Activated CD4-positive, alpha-beta memory T cell treated with anti-CD3 and anti-CD28 coated beads for 36 hours (primary cell): ENCODE measurements at regions of chr12 and their contacts with region 1.

Region 1: GRCh38 chr12:68610370-68611093 is at the start of gene RAP1B:
- DNase-seq: peak; percentile 92
- H3K4me3 Mint-ChIP-seq: peak within 1 kb of the TSS; percentile 94
- H3K27ac Mint-ChIP-seq: peak within 1 kb of the TSS; percentile 98
- H3K4me1 Mint-ChIP-seq: peaks cover 37% of the 10 kb centered on the region
- H3K27me3 Mint-ChIP-seq: no peaks in the 10 kb centered on the region
- total RNA-seq, gene RAP1B: 211 to 213 TPM

Region 2: GRCh38 chr12:68223083-68223747 is 387.3 kb before region 1 on chr12:
- CTCF ChIA-PET with region 1: interaction called, 3 read pairs
- POLR2A ChIA-PET with region 1: no interaction called
- intact Hi-C with region 1: loop called (anchors 10 kb)
- DNase-seq: peak; percentile 83
- H3K4me3 Mint-ChIP-seq: no peak overlapping the region
- H3K27ac Mint-ChIP-seq: no peak overlapping the region
- H3K4me1 Mint-ChIP-seq: peaks cover 17% of the 10 kb centered on the region
- H3K27me3 Mint-ChIP-seq: peaks cover 7% of the 10 kb centered on the region

Region 3: GRCh38 chr12:68374307-68374982 is 236.1 kb before region 1 on chr12:
- CTCF ChIA-PET with region 1: interaction called, 5 read pairs
- POLR2A ChIA-PET with region 1: interaction called, 34 read pairs
- intact Hi-C with region 1: loop called (anchors 1 kb)
- DNase-seq: peak; percentile 84
- H3K4me3 Mint-ChIP-seq: peak overlapping the region; percentile 27
- H3K27ac Mint-ChIP-seq: peak overlapping the region; percentile 98
- H3K4me1 Mint-ChIP-seq: peaks cover 45% of the 10 kb centered on the region
- H3K27me3 Mint-ChIP-seq: no peaks in the 10 kb centered on the region

Region 4: GRCh38 chr12:68468036-68468435 is 142.5 kb before region 1 on chr12:
- CTCF ChIA-PET with region 1: no interaction called
- POLR2A ChIA-PET with region 1: no interaction called
- intact Hi-C with region 1: no loop called
- DNase-seq: no peak
- H3K4me3 Mint-ChIP-seq: no peak overlapping the region
- H3K27ac Mint-ChIP-seq: no peak overlapping the region
- H3K4me1 Mint-ChIP-seq: peaks cover 6% of the 10 kb centered on the region
- H3K27me3 Mint-ChIP-seq: no peaks in the 10 kb centered on the region

Region 5: GRCh38 chr12:68497702-68498101 is 112.8 kb before region 1 on chr12:
- CTCF ChIA-PET with region 1: interaction called, 3 read pairs
- POLR2A ChIA-PET with region 1: interaction called, 22 read pairs
- intact Hi-C with region 1: loop called (anchors 1 kb)
- DNase-seq: peak; percentile 24
- H3K4me3 Mint-ChIP-seq: peak overlapping the region; percentile 57
- H3K27ac Mint-ChIP-seq: peak overlapping the region; percentile 92
- H3K4me1 Mint-ChIP-seq: peaks cover 29% of the 10 kb centered on the region
- H3K27me3 Mint-ChIP-seq: no peaks in the 10 kb centered on the region

Region 6: GRCh38 chr12:68641138-68641537 is 30.6 kb after region 1 on chr12:
- CTCF ChIA-PET with region 1: interaction called, 5 read pairs
- POLR2A ChIA-PET with region 1: interaction called, 3 read pairs
- intact Hi-C with region 1: loop called (anchors 1 kb)
- DNase-seq: peak; percentile 68
- H3K4me3 Mint-ChIP-seq: peak overlapping the region; percentile 32
- H3K27ac Mint-ChIP-seq: peak overlapping the region; percentile 8
- H3K4me1 Mint-ChIP-seq: peaks cover 76% of the 10 kb centered on the region
- H3K27me3 Mint-ChIP-seq: no peaks in the 10 kb centered on the region

Region 7: DNA sequence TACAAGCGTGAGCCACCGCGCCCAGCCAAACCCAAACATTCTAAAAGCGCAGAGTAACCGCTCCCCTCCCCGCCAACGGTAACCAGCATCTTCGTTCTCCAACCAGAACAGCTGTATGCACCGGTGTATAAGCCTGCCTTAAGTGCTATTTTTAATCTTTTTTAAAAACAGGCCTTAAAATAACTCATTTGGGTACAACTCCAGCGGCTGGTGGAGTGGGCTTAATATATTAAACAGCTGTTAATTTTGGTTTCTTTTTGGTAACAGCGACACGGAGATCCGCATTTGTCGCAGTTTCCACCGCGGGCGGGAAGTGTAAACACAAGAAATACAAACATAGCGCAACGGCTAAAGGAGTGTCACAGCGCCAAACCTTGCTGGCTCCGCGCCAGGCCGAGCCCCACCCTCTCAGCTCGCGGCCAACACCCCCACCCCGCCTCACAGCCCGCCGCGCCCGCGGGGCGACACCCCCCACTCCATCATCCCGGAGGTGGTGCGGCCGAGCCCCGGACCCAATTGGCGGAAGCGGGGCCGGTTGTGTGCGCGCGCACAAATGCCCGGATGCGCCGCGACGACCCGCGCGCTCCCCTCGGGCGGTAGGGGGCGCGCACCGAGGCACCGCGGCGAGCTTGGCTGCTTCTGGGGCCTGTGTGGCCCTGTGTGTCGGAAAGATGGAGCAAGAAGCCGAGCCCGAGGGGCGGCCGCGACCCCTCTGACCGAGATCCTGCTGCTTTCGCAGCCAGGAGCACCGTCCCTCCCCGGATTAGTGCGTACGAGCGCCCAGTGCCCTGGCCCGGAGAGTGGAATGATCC is 197.2 kb after region 1 on chr12 and contains the start of gene MDM2:
- CTCF ChIA-PET with region 1: no interaction called
- POLR2A ChIA-PET with region 1: interaction called, 5 read pairs
- intact Hi-C with region 1: loop called (anchors 2 kb)
- DNase-seq: peak; percentile 97
- H3K4me3 Mint-ChIP-seq: peak within 1 kb of the TSS; percentile 93
- H3K27ac Mint-ChIP-seq: peak within 1 kb of the TSS; percentile 99
- H3K4me1 Mint-ChIP-seq: peaks cover 28% of the 10 kb centered on the region
- H3K27me3 Mint-ChIP-seq: no peaks in the 10 kb centered on the region
- total RNA-seq, gene MDM2: 125 to 136 TPM